ENCODE measurements at regions of chr17 and their contacts with region 1.

Region 1: DNA sequence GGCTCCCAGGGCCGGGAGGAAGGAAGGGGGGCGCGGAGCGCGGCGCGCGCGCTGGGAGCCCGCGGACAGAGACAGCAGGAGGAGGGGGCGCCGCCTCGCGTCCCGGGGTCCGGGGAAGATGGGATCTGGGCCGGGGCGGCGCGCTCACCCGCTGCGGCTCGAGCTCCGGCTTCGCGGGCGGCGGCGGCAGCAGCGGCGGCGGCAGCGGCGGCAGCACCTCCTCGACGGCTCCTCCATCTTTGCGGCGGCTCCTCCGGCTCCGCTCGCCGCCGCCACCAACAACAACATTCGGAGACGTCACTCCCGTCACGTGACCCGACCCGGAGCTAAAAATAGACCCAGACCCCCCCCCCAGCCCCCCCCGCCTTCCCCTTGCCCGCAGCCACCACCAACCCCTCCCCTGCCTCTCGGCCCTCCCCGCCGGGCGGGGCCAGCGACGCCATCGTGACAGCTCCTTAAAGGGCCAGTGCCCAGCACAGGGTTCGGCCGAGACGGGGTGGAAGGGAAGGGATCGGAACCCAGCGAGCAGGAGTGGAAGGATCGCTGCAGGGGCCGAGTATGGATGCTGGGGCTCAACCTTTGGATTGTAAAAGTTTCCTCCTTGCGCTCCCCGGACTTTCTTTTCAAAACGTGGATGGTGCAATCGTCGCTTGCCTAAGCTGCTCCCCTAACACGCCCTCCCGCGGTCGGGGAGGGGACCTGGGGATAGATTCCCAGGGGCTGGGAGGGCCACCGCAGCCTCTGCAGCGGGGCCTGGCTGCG is at the start of gene HDAC5:
- DNase-seq: peak; percentile 88 to 95 (median 95)
- ATAC-seq: peak; percentile 98
- H3K4me3 ChIP-seq: peak within 1 kb of the TSS; percentile 95
- H3K4me3 Mint-ChIP-seq: peak within 1 kb of the TSS; percentile 92 to 99 (median 98)
- H3K27ac ChIP-seq: peak within 1 kb of the TSS; percentile 90
- H3K27ac Mint-ChIP-seq: peak within 1 kb of the TSS; percentile 84 to 99 (median 96)
- H3K4me1 ChIP-seq: peaks cover 14 to 21% of the 10 kb centered on the region in 2 donors
- H3K4me1 Mint-ChIP-seq: peaks cover 21 to 53% (median 46%) of the 10 kb centered on the region in 7 donors
- H3K27me3 ChIP-seq: no peaks in the 10 kb centered on the region
- H3K27me3 Mint-ChIP-seq: peaks cover 0 to 9% (median 0%) of the 10 kb centered on the region in 5 donors
- total RNA-seq, gene HDAC5: 15.2 to 106 (median 70.9) TPM

Region 2: DNA sequence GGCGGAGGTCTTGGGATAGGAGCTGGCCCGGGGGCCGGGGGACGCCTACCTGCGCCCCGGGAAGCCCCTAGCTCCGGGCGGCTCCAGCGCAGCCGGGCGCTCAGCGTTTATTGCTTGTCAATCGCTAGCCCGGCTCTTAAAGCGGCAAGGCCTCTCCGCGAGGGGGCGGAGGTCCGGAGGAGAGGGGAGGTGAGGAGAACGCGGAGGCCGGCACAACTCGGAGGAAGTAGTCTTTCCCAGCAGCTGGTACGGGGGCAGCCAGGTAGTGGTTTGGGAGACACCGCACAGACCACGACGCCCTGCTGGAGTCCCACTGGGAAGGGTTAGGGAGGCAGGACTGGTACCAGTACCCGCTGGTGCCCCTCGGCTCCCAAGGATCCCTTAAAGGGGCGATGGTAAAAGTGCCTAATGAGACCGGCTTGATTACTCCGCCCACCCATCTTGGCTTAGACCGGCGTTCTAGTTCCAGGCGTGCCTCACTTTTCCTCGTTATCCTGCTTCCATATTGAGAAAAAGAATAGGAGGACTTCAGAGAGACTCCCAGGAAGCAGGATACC is 216.0 kb before region 1 on chr17 and contains the start of gene MPP2:
- CTCF ChIA-PET with region 1: interaction called, 4 read pairs
- POLR2A ChIA-PET with region 1: no interaction called
- intact Hi-C with region 1: loop called in 1 of 2 experiments (anchors 2 kb)
- DNase-seq: peak; percentile 28 to 76 (median 68)
- ATAC-seq: peak; percentile 73
- H3K4me3 ChIP-seq: peak within 1 kb of the TSS; percentile 78
- H3K4me3 Mint-ChIP-seq: peak within 1 kb of the TSS; percentile 70 to 95 (median 89)
- H3K27ac ChIP-seq: peak within 1 kb of the TSS; percentile 80
- H3K27ac Mint-ChIP-seq: peak within 1 kb of the TSS in 8 of 9 donors; percentile 45 to 95 (median 89)
- H3K4me1 ChIP-seq: peaks cover 17 to 20% of the 10 kb centered on the region in 2 donors
- H3K4me1 Mint-ChIP-seq: peaks cover 0 to 16% (median 12%) of the 10 kb centered on the region in 7 donors
- H3K27me3 ChIP-seq: peaks cover 0 to 4% of the 10 kb centered on the region in 2 donors
- H3K27me3 Mint-ChIP-seq: peaks cover 0 to 63% (median 5%) of the 10 kb centered on the region in 5 donors
- total RNA-seq, gene MPP2: 0.24 to 9.3 (median 3.7) TPM

Region 3: GRCh38 chr17:44014437-44015172 is 108.9 kb before region 1 on chr17 and contains the start of gene TMEM101:
- CTCF ChIA-PET with region 1: no interaction called
- POLR2A ChIA-PET with region 1: no interaction called
- intact Hi-C with region 1: loop called in 1 of 2 experiments (anchors 2 kb)
- DNase-seq: peak; percentile 63 to 90 (median 82)
- ATAC-seq: peak; percentile 99
- H3K4me3 ChIP-seq: peak within 1 kb of the TSS; percentile 96
- H3K4me3 Mint-ChIP-seq: peak within 1 kb of the TSS; percentile 93 to 100 (median 98)
- H3K27ac ChIP-seq: peak within 1 kb of the TSS; percentile 73
- H3K27ac Mint-ChIP-seq: peak within 1 kb of the TSS; percentile 84 to 99 (median 95)
- H3K4me1 ChIP-seq: peaks cover 8 to 9% of the 10 kb centered on the region in 2 donors
- H3K4me1 Mint-ChIP-seq: peaks cover 7 to 23% (median 11%) of the 10 kb centered on the region in 7 donors
- H3K27me3 ChIP-seq: no peaks in the 10 kb centered on the region
- H3K27me3 Mint-ChIP-seq: peaks cover 0 to under 1% (median 0%) of the 10 kb centered on the region in 5 donors
- total RNA-seq, gene TMEM101: 12.1 to 32.0 (median 30.5) TPM

Region 4: DNA sequence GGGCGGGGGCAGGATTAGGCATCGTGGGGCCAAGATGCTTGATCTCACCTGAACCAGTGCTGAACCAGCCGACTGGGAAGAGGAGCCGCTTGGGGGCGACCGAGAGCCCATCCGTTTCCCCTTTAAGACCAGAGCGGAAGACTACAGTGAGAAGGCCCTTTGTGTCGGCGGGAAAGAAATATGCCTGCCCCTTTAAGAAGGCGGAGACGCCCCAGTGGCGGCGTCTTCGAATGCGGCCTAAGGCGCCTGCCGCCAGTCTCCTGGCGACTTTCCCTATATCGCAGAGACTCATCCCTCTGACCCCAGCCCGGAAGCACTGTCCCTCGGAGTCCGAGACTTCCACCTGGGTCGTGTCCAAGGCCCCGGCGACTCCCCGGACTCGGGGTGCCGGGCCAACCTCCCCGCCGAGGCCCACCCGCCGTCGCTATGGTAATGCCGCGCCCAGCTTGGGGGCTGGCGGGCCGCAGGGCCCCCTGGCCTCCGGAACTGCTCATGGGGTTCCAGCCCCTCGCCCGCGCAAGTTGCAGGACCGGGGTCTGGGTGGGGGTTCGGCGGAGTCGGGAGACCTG is 18.3 kb after region 1 on chr17 and contains the start of gene HROB:
- CTCF ChIA-PET with region 1: interaction called, 8 read pairs
- POLR2A ChIA-PET with region 1: interaction called, 4 read pairs
- intact Hi-C with region 1: loop called (anchors 1 kb)
- DNase-seq: peak; percentile 96 to 100 (median 98)
- ATAC-seq: peak; percentile 98
- H3K4me3 ChIP-seq: peak within 1 kb of the TSS; percentile 84
- H3K4me3 Mint-ChIP-seq: peak within 1 kb of the TSS; percentile 82 to 89 (median 84)
- H3K27ac ChIP-seq: peak within 1 kb of the TSS; percentile 84
- H3K27ac Mint-ChIP-seq: peak within 1 kb of the TSS; percentile 65 to 91 (median 87)
- H3K4me1 ChIP-seq: peaks cover 0 to 9% of the 10 kb centered on the region in 2 donors
- H3K4me1 Mint-ChIP-seq: peaks cover 0 to 32% (median 12%) of the 10 kb centered on the region in 7 donors
- H3K27me3 ChIP-seq: no peaks in the 10 kb centered on the region
- H3K27me3 Mint-ChIP-seq: peaks cover 0 to 5% (median 0%) of the 10 kb centered on the region in 5 donors
- total RNA-seq, gene HROB: 0.76 to 12.3 (median 2.1) TPM

Region 5: DNA sequence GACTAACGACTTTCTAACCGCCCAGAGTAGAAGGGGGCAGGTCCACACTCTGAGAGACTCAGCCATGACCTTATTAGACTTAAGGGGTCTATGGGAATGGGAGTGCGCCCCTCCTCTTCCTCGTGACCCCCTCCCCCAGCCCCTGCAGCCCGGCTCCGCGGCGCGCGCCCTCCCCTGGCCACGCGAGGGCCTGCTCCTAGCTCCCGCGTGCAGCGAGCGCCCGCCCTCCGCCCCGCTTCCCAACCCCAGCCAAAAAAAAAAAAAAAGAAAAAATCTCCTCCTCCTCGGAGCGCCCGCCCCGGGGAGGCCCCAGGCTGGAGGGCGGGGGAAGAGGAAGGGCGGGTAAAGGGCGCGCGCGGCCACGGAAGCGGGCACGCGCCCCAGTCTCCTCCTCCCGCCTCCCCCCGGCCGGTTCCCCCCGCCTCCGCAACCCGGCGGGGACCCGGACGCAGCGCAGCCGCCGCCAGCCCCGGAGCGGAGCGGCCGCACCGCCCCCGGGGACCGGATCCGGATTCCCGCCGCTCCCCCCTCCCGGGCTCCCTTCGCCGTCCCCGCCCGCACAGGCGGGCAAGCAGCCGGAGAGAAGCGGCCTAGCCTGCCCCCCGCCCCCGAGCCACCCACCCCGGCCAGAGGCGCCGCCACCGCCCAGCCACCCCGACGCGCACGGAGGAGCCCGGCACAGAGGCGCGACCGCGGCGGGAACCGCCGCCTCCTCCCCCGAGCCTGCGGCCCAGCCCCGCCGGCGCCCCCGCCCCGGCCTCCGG is 95.0 kb after region 1 on chr17:
- CTCF ChIA-PET with region 1: interaction called, 5 read pairs
- POLR2A ChIA-PET with region 1: interaction called, 9 read pairs
- intact Hi-C with region 1: loop called in 1 of 2 experiments (anchors 1 kb)
- DNase-seq: peak; percentile 82 to 93 (median 92)
- ATAC-seq: peak; percentile 80
- H3K4me3 ChIP-seq: peak overlapping the region; percentile 68
- H3K4me3 Mint-ChIP-seq: peak overlapping the region; percentile 76 to 94 (median 86)
- H3K27ac ChIP-seq: peak overlapping the region; percentile 90
- H3K27ac Mint-ChIP-seq: peak overlapping the region; percentile 84 to 99 (median 97)
- H3K4me1 ChIP-seq: peaks cover 38 to 42% of the 10 kb centered on the region in 2 donors
- H3K4me1 Mint-ChIP-seq: peaks cover 48 to 53% (median 52%) of the 10 kb centered on the region in 7 donors
- H3K27me3 ChIP-seq: no peaks in the 10 kb centered on the region
- H3K27me3 Mint-ChIP-seq: no peaks in the 10 kb centered on the region

Region 6: DNA sequence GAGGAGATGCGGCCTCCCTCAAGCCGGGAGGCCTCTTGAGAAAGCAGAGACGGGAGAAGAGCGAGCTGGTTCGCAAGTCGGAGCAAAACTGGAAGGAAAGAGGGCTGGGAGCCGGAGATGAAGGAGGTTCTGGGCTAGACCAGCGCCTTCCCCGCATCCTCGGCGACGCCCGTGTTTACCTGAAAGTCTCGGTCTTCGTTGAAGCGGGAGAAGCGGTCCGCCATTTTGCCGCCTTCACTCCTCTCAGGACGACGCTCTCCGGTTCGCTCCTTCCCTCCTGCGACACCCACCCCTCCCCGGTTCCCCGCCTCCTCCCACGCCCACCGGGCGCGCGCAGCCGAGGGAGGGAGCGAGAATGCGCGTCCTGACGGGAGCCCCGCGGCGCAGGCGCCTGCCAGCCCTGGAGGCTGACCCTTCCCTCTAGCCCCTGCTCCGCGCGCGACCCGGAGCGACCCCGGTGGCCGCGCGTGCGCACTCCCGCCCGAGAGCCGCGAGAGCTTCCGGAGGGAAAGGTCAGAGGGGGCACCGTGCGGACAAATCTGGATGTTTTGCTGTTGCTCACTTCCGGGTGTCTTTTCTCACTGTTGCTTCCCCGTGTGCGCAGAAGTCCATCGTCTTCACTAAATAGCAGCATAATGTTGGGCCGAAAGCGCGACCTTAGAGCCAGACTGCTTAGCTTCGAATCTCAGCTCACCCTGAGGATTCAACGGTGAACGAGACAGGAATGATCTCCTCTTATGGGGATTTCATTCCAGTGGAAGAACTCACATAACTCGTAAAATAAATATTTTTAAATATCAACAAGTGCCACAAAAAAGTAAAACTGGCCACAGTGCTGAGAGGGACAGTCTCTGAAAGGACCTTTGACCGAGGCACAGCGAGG is 379.9 kb after region 1 on chr17 and contains the start of gene GPATCH8:
- CTCF ChIA-PET with region 1: no interaction called
- POLR2A ChIA-PET with region 1: no interaction called
- intact Hi-C with region 1: loop called in 1 of 2 experiments (anchors 2 kb)
- DNase-seq: peak; percentile 87 to 97 (median 94)
- ATAC-seq: peak; percentile 94
- H3K4me3 ChIP-seq: peak within 1 kb of the TSS; percentile 84
- H3K4me3 Mint-ChIP-seq: peak within 1 kb of the TSS; percentile 92 to 99 (median 98)
- H3K27ac ChIP-seq: peak within 1 kb of the TSS; percentile 93
- H3K27ac Mint-ChIP-seq: peak within 1 kb of the TSS; percentile 95 to 99 (median 97)
- H3K4me1 ChIP-seq: peaks cover 18 to 25% of the 10 kb centered on the region in 2 donors
- H3K4me1 Mint-ChIP-seq: peaks cover 24 to 50% (median 39%) of the 10 kb centered on the region in 7 donors
- H3K27me3 ChIP-seq: no peaks in the 10 kb centered on the region
- H3K27me3 Mint-ChIP-seq: peaks cover 0 to 5% (median 4%) of the 10 kb centered on the region in 5 donors
- total RNA-seq, gene GPATCH8: 45.0 to 88.5 (median 82.9) TPM